CD8-positive, alpha-beta T cell (primary cell): ENCODE measurements at regions of chr16 and their contacts with region 1.

Region 1: GRCh38 chr16:87853411-87854052 is 15.8 kb downstream of the SLC7A5 start:
- DNase-seq: peak; percentile 72 to 97 (median 87)
- ATAC-seq: peak; percentile 68
- H3K4me3 ChIP-seq: peak overlapping the region; percentile 15 to 28
- H3K4me3 Mint-ChIP-seq: peak overlapping the region; percentile 62
- H3K27ac ChIP-seq: peak overlapping the region in 1 of 2 experiments; percentile 15
- H3K27ac Mint-ChIP-seq: peak overlapping the region; percentile 89
- H3K4me1 ChIP-seq: peaks cover 44% of the 10 kb centered on the region
- H3K4me1 Mint-ChIP-seq: peaks cover 39% of the 10 kb centered on the region
- H3K27me3 ChIP-seq: no peaks in the 10 kb centered on the region
- H3K27me3 Mint-ChIP-seq: no peaks in the 10 kb centered on the region
- CTCF ChIP-seq: no peak

Region 2: GRCh38 chr16:87790278-87791032 is 63.1 kb before region 1 on chr16:
- CTCF ChIA-PET with region 1: interaction called, 11 read pairs
- POLR2A ChIA-PET with region 1: no interaction called
- intact Hi-C with region 1: no loop called
- DNase-seq: no peak
- ATAC-seq: no peak
- H3K4me3 ChIP-seq: no peak overlapping the region
- H3K4me3 Mint-ChIP-seq: no peak overlapping the region
- H3K27ac ChIP-seq: no peak overlapping the region
- H3K27ac Mint-ChIP-seq: no peak overlapping the region
- H3K4me1 ChIP-seq: no peaks in the 10 kb centered on the region
- H3K4me1 Mint-ChIP-seq: no peaks in the 10 kb centered on the region
- H3K27me3 ChIP-seq: no peaks in the 10 kb centered on the region
- H3K27me3 Mint-ChIP-seq: no peaks in the 10 kb centered on the region
- CTCF ChIP-seq: no peak

Region 3: DNA sequence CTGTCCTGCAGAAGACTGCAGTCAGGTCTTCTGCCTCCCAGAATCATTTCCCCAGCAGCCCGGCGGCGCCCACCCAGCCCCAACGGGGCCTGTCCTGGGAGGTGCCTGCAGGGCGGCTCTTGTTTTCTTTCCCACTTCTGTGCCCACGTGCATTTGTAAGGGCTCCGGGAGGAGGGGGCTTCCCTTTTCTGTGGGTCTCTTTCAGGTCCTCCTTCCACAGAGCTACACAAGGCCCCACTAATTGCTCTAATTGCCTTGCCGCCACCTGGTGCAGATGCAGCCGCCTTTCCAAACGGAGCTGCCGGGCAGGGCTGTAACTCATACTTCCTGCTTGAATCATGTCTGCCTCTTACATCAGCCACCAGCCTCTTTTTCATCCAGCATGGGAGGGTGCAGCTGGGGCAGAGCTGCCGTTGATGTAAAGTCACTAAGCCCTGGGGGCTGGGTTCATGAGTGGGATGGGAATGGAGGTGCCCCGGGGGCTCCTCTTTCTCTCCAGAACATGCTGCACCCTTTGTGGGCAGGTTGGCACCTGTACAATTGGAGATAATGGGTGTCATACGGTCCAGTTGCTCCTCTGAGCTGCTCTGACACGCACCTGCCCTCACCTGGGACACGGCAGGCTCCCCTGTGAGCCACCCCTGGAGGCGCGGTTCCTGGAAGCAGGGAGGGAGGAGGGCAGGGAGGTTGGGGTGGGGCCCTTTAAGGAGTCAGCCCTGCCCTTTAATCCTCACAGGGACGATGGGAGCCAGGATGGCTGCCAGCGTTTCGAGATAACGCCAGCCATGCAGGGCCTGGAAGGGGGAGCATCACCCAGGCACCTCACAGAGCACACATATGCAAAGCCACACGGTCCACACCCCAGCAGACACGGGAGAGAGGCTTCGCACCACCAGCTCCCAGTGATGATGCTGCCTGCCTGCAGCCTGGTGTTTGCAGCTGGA is 46.7 kb before region 1 on chr16:
- CTCF ChIA-PET with region 1: interaction called, 13 read pairs
- POLR2A ChIA-PET with region 1: no interaction called
- intact Hi-C with region 1: no loop called
- DNase-seq: peak in 7 of 9 experiments; percentile 20 to 77 (median 61)
- ATAC-seq: peak; percentile 84
- H3K4me3 ChIP-seq: peak overlapping the region; percentile 30 to 48
- H3K4me3 Mint-ChIP-seq: peak overlapping the region; percentile 90
- H3K27ac ChIP-seq: peak overlapping the region in 1 of 2 experiments; percentile 40
- H3K27ac Mint-ChIP-seq: peak overlapping the region; percentile 93
- H3K4me1 ChIP-seq: peaks cover 17% of the 10 kb centered on the region
- H3K4me1 Mint-ChIP-seq: peaks cover 12% of the 10 kb centered on the region
- H3K27me3 ChIP-seq: peaks cover 0 to 2% of the 10 kb centered on the region in 2 experiments
- H3K27me3 Mint-ChIP-seq: no peaks in the 10 kb centered on the region
- CTCF ChIP-seq: no peak

Region 4: GRCh38 chr16:87822108-87822970 is 31.2 kb before region 1 on chr16:
- CTCF ChIA-PET with region 1: interaction called, 10 read pairs
- POLR2A ChIA-PET with region 1: no interaction called
- intact Hi-C with region 1: no loop called
- DNase-seq: peak in 3 of 9 experiments; percentile 18 to 30 (median 18)
- ATAC-seq: no peak
- H3K4me3 ChIP-seq: no peak overlapping the region
- H3K4me3 Mint-ChIP-seq: no peak overlapping the region
- H3K27ac ChIP-seq: no peak overlapping the region
- H3K27ac Mint-ChIP-seq: peak overlapping the region; percentile 57
- H3K4me1 ChIP-seq: peaks cover 9% of the 10 kb centered on the region
- H3K4me1 Mint-ChIP-seq: peaks cover 8% of the 10 kb centered on the region
- H3K27me3 ChIP-seq: no peaks in the 10 kb centered on the region
- H3K27me3 Mint-ChIP-seq: no peaks in the 10 kb centered on the region
- CTCF ChIP-seq: no peak

Region 5: GRCh38 chr16:87836844-87837581 is 16.5 kb before region 1 on chr16:
- CTCF ChIA-PET with region 1: interaction called, 22 read pairs
- POLR2A ChIA-PET with region 1: no interaction called
- intact Hi-C with region 1: no loop called
- DNase-seq: no peak
- ATAC-seq: no peak
- H3K4me3 ChIP-seq: no peak overlapping the region
- H3K4me3 Mint-ChIP-seq: no peak overlapping the region
- H3K27ac ChIP-seq: no peak overlapping the region
- H3K27ac Mint-ChIP-seq: peak overlapping the region; percentile 41
- H3K4me1 ChIP-seq: peaks cover 4% of the 10 kb centered on the region
- H3K4me1 Mint-ChIP-seq: no peaks in the 10 kb centered on the region
- H3K27me3 ChIP-seq: no peaks in the 10 kb centered on the region
- H3K27me3 Mint-ChIP-seq: no peaks in the 10 kb centered on the region
- CTCF ChIP-seq: no peak

Region 6: DNA sequence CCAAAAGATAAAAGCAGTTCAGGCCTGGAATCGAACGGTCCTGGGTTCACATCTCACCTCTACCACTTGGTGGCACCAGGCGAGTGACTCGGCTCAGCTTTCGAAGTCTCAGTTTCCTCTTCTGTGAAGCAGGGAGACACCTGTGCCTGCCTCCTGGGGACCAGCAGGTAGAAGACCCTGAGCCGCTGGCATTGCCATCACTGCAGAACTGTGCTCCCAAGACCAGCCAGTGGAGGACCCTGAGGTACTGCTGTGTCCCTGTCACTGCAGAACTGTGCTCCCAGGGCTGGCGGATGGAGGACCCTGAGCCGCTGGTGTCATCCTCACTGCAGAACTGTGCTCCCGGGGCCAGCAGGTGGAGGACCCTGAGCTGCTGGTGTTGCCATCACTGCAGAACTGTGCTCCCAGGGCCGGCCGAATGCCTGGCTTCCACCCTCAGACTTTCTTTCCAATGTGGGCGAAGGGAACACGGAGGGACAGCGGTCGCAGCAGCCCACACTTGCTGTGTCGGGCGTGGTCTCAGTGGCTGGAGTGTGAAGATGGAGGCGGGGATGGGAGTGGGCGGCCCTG is 24.5 kb after region 1 on chr16:
- CTCF ChIA-PET with region 1: interaction called, 308 read pairs
- POLR2A ChIA-PET with region 1: no interaction called
- intact Hi-C with region 1: no loop called
- DNase-seq: peak in 1 of 9 experiments; percentile 46
- ATAC-seq: no peak
- H3K4me3 ChIP-seq: no peak overlapping the region
- H3K4me3 Mint-ChIP-seq: no peak overlapping the region
- H3K27ac ChIP-seq: no peak overlapping the region
- H3K27ac Mint-ChIP-seq: no peak overlapping the region
- H3K4me1 ChIP-seq: peaks cover 6% of the 10 kb centered on the region
- H3K4me1 Mint-ChIP-seq: peaks cover 8% of the 10 kb centered on the region
- H3K27me3 ChIP-seq: peaks cover 0 to 2% of the 10 kb centered on the region in 2 experiments
- H3K27me3 Mint-ChIP-seq: no peaks in the 10 kb centered on the region
- CTCF ChIP-seq: no peak

Region 7: DNA sequence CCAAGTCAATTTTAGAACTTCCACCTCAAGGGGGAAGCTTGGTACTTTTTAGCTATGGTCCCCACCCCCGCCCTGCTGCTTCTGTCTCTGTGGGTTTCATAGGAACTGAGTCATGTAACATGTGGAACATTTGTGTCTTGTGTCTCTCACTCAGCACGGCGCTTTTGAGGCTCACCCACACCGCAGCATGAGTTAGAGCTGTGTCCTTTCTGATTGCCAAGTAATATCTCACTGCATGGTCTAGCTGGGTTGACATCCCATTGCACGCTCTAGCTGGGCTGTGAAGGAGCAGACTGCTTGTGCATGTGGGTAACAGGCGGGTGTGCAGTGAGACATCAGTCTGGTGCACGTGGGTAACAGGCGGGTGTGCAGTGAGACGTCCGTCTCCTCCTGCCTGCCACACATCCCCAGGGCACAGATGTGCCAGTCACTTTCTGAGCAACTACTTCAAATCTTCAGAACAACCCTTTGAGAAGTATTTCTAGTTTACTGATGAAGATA is 42.2 kb after region 1 on chr16:
- CTCF ChIA-PET with region 1: interaction called, 30 read pairs
- POLR2A ChIA-PET with region 1: no interaction called
- intact Hi-C with region 1: no loop called
- DNase-seq: peak in 8 of 9 experiments; percentile 50 to 85 (median 72)
- ATAC-seq: peak; percentile 75
- H3K4me3 ChIP-seq: no peak overlapping the region
- H3K4me3 Mint-ChIP-seq: peak overlapping the region; percentile 54
- H3K27ac ChIP-seq: peak overlapping the region in 1 of 2 experiments; percentile 53
- H3K27ac Mint-ChIP-seq: peak overlapping the region; percentile 91
- H3K4me1 ChIP-seq: peaks cover 38% of the 10 kb centered on the region
- H3K4me1 Mint-ChIP-seq: peaks cover 35% of the 10 kb centered on the region
- H3K27me3 ChIP-seq: no peaks in the 10 kb centered on the region
- H3K27me3 Mint-ChIP-seq: no peaks in the 10 kb centered on the region
- CTCF ChIP-seq: no peak